ENCODE measurements at regions of chr2 and their contacts with region 1.

Region 1: DNA sequence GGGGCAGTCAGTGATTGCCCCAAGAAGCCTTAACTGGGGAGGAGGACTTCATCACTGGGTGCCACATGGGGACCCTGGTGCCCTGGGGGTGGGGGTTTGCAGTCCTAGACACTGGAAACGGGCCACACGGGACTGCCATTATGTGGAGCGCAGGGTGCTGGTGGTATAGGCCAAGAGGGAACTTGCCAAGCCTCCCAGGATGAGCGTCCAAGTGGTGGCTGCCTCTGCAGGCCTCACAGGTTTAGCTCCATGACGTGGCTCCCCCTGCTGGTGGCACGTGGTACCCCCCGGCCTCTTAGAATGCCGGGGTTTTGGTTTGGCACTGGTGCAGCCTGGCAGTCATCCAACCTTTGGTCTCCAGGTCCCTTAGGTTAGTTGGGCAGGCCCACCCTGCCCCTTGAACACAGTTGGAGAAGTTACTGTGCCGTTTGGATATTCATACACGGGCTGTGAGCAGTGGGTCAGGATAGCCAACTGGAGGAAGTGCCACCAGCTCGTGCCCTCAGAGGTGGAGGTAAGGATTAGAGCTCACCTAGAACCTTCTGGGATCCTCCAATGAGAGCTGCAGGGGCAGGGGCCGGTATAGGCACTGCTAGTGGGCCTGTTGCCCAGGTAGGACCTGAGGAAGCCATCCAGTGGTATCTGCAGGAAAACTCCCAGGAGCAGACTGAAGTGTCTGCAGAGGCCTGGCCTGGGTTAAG is 5.6 kb downstream of the PTMA start:
- DNase-seq: peak; percentile 86 to 94 (median 91)
- ATAC-seq: peak; percentile 37 to 63 (median 48)
- H3K4me3 ChIP-seq: peak overlapping the region in 1 of 12 donors; percentile 9
- H3K27ac ChIP-seq: peak overlapping the region in 11 of 12 donors; percentile 28 to 100 (median 62)
- H3K4me1 ChIP-seq: peaks cover 6 to 71% (median 54%) of the 10 kb centered on the region in 12 donors
- H3K27me3 ChIP-seq: no peaks in the 10 kb centered on the region
- CTCF ChIP-seq: peak; percentile 92 to 98 (median 94)
- POLR2A ChIP-seq: peak in 1 of 2 donors; percentile 36

Region 2: DNA sequence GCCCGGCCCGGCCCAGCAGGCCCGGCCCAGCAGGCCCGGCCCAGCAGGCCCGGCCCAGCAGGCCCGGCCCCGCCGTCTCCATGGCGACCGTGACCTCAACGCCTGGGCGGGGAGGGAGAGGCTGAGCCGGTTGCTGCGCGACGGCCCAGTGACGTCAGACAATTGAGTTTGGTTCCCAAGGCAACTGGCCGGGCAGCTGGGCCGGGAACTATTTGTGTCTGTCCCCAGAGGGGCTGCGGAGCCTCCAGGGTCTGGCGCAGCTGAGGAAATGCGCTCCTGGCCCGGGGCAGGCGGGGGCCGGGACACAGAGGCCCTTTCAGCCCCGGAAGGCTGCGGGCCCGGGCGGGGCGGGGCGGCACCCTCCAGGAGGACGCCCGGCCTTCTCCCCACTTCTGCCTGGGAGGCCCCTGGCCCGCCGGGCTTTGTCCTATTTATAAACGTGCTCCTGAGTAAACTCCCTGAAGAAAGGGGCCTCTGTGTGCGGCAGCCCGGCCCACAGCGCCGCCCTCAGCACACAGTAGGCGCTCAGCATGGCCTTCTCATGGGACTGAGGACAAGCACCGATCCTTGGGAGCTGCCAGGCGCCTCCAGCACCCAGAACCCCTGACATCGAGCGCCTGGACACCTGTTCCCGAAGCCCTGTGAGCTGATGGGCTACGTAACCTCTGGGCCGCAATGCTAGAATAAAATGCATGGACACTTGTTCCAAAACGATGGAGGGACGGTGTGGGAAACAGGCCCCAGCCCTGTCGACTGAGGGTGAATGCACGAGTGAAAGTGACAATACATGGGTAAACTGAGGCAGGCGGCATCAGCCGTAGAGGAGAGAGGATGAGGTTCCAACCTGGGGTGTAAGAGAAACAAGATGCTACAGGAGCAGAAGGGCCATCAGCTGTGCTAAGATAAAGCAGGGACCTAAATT is 108.9 kb before region 1 on chr2:
- intact Hi-C with region 1: loop called in 3 of 10 experiments (anchors 1 to 5 kb)
- DNase-seq: peak; percentile 99 to 100 (median 100)
- ATAC-seq: peak; percentile 92 to 95 (median 93)
- H3K4me3 ChIP-seq: peak overlapping the region in 11 of 12 donors; percentile 46 to 72 (median 63)
- H3K27ac ChIP-seq: peak overlapping the region; percentile 95 to 100 (median 98)
- H3K4me1 ChIP-seq: peaks cover 7 to 52% (median 28%) of the 10 kb centered on the region in 12 donors
- H3K27me3 ChIP-seq: no peaks in the 10 kb centered on the region
- CTCF ChIP-seq: peak in 3 of 12 donors; percentile 25 to 31 (median 26)
- POLR2A ChIP-seq: peak in 1 of 2 donors; percentile 74

Region 3: DNA sequence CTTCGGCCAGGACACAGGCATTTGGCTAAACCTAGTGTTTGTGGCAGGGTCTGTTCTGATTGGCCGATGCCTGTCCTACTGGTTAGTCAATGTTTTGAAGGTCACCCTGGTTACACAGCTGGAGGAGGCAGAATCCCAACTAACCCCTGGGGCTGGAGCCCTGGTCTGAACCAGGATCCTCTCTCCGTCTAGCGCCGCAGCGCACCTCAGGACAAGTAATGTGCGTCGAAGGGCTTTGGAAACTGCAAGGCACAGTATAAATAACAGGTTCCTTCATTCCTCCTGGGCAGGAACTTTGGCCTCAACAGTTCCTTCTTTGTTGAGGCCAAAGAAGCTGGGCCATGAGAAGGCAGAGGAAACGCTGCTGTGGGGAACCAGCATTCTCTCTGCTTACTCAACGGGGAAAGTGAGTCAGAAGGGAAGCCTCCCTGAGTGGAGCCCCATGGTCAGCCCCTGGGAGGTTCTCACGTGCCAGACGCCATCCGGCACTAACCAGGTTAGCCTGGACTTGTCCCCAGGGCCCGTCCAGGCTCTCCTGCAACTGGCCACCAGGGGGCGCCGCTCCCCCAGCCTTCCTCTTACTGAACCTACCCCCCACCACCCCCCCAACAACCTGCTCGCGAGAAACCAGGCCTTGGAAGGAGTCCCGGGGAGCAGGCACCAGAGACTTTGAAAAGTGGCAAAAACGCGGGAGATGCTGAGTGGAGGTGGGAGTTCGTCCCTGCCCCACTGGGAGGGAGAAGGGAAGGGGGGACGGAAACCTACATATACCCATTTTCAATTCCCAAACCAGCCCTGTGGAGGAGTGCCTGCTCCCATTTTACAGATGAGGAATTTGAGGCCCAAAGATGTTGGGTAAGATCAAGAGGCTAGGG is 101.5 kb before region 1 on chr2:
- intact Hi-C with region 1: loop called (anchors 1 to 5 kb)
- DNase-seq: peak; percentile 91 to 95 (median 92)
- ATAC-seq: peak; percentile 65 to 79 (median 72)
- H3K4me3 ChIP-seq: peak overlapping the region in 1 of 12 donors; percentile 14
- H3K27ac ChIP-seq: peak overlapping the region; percentile 91 to 100 (median 98)
- H3K4me1 ChIP-seq: peaks cover 16 to 54% (median 35%) of the 10 kb centered on the region in 12 donors
- H3K27me3 ChIP-seq: peaks cover 0 to 8% (median 0%) of the 10 kb centered on the region in 9 donors
- CTCF ChIP-seq: peak; percentile 93 to 99 (median 98)
- POLR2A ChIP-seq: no peak

Region 4: GRCh38 chr2:231648587-231649174 is 65.2 kb before region 1 on chr2:
- intact Hi-C with region 1: loop called in 3 of 10 experiments (anchors 1 kb)
- DNase-seq: peak; percentile 70 to 88 (median 74)
- ATAC-seq: peak; percentile 67 to 82 (median 79)
- H3K4me3 ChIP-seq: no peak overlapping the region
- H3K27ac ChIP-seq: peak overlapping the region in 1 of 12 donors; percentile 33
- H3K4me1 ChIP-seq: peaks cover 1 to 38% (median 16%) of the 10 kb centered on the region in 12 donors
- H3K27me3 ChIP-seq: no peaks in the 10 kb centered on the region
- CTCF ChIP-seq: peak; percentile 51 to 79 (median 65)
- POLR2A ChIP-seq: no peak

Region 5: DNA sequence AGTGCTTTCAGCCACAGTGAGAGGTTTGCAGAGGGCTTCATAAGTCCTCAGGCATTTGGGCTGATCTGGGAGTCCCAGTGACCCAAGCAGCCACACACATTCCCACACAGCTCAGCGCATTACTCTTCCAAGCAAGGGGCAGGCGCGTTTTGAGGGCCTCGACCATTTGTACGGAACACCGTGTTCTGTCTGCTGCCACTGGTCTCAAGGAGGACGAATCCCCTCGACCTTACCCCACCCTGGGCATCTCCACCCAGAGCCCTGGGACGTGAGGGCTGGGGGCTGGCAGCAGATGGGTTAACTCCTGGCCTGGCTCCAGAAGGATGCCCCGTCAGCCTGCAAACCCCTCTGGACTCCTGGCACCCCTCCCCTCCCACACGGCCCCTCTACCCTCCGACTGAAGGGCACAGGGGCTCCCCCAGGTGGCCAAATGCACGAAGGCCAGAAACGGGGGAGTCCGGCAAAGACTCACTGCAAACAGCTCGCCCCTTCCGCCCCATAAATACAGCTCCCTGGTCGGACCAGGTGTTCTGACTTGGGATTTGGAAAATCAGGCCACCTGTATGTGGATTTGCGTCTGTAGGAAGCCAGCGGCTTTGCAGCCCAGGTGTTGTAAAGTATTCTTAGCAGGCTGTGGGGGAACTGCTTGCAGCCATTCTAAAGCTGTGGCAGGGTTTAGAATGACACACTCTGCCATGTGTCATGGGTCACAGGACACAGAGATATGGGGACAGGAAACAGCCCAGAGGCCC is 39.1 kb before region 1 on chr2:
- intact Hi-C with region 1: loop called in 8 of 10 experiments (anchors 1 to 2 kb)
- DNase-seq: peak; percentile 71 to 86 (median 76)
- ATAC-seq: peak in 3 of 4 donors; percentile 41 to 58 (median 57)
- H3K4me3 ChIP-seq: no peak overlapping the region
- H3K27ac ChIP-seq: peak overlapping the region; percentile 70 to 98 (median 88)
- H3K4me1 ChIP-seq: peaks cover 5 to 58% (median 46%) of the 10 kb centered on the region in 12 donors
- H3K27me3 ChIP-seq: no peaks in the 10 kb centered on the region
- CTCF ChIP-seq: peak; percentile 75 to 95 (median 86)
- POLR2A ChIP-seq: no peak

Region 6: GRCh38 chr2:231680992-231681853 is 32.7 kb before region 1 on chr2:
- intact Hi-C with region 1: loop called (anchors 1 to 2 kb)
- DNase-seq: peak; percentile 92 to 94 (median 93)
- ATAC-seq: peak; percentile 80 to 93 (median 90)
- H3K4me3 ChIP-seq: peak overlapping the region; percentile 28 to 89 (median 59)
- H3K27ac ChIP-seq: peak overlapping the region; percentile 85 to 98 (median 95)
- H3K4me1 ChIP-seq: peaks cover 0 to 44% (median 10%) of the 10 kb centered on the region in 12 donors
- H3K27me3 ChIP-seq: no peaks in the 10 kb centered on the region
- CTCF ChIP-seq: no peak
- POLR2A ChIP-seq: peak in 1 of 2 donors; percentile 74